ENCODE measurements at regions of chr12 and their contacts with region 1.

Region 1: GRCh38 chr12:54324617-54325441 is at the start of gene COPZ1:
- DNase-seq: peak; percentile 93 to 95
- ATAC-seq: peak; percentile 97 to 99 (median 98)
- H3K4me3 ChIP-seq: peak within 1 kb of the TSS; percentile 87
- H3K27ac ChIP-seq: peak within 1 kb of the TSS; percentile 91
- H3K4me1 ChIP-seq: peaks cover 33% of the 10 kb centered on the region
- H3K27me3 ChIP-seq: no peaks in the 10 kb centered on the region
- CTCF ChIP-seq: peak; percentile 69
- total RNA-seq, gene COPZ1: 84.4 to 102 (median 93.0) TPM

Region 2: GRCh38 chr12:54251667-54252284 is 73.1 kb before region 1 on chr12:
- intact Hi-C with region 1: loop called in 1 of 2 experiments (anchors 5 kb)
- DNase-seq: no peak
- ATAC-seq: peak in 2 of 4 donors; percentile 55 to 69
- H3K4me3 ChIP-seq: no peak overlapping the region
- H3K27ac ChIP-seq: no peak overlapping the region
- H3K4me1 ChIP-seq: no peaks in the 10 kb centered on the region
- H3K27me3 ChIP-seq: no peaks in the 10 kb centered on the region
- CTCF ChIP-seq: peak; percentile 58

Region 3: DNA sequence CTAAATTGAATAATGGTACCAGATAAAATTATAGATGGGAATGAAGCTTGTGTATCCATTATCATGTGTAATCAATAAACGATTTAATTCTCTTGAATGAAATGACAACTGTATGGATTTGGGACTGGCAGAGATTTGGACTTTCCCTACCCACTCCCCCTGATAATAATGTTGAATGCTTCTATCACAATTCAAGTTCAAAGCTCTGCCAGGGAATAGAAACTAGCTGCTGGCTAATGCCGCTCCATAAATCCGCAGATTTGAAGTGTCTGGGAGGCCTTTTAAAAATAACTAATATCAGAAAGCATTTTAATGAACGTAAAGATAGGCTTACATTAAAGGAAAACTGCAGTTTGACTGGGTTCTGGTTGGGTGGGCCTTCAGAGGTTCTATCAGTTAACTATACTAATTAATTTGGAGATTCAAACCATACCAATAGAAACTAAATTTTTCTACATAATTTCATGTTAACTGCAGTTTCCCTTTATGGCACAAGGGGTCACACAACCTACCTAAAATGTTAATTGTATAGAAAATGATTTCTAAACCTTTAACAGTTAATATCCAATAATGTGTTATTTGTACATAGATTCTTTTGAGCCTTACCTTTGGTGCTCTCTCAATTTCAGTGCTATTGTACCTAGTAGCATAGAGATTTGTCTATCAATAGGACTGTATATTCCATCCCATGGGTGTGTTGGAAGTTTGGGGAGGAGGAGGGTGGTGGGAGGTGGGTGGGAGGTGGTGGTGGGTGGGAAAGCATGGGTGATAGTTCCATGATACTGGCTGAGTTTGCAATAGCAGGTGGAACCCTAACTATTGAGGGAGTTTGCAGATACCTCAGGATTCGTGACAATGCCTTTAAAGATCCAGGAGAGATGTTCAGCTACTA is 39.4 kb before region 1 on chr12:
- intact Hi-C with region 1: loop called in 1 of 2 experiments (anchors 5 kb)
- DNase-seq: no peak
- ATAC-seq: no peak
- H3K4me3 ChIP-seq: peak overlapping the region; percentile 98
- H3K27ac ChIP-seq: peak overlapping the region; percentile 50
- H3K4me1 ChIP-seq: peaks cover 67% of the 10 kb centered on the region
- H3K27me3 ChIP-seq: no peaks in the 10 kb centered on the region
- CTCF ChIP-seq: peak; percentile 29

Measured in psoas muscle (tissue), 8 donors.